Colonic mucosa (tissue), 4 donors: ENCODE measurements at regions of chr12 and their contacts with region 1.

Region 1: GRCh38 chr12:121560392-121561008 is 20.3 kb downstream of the KDM2B start:
- DNase-seq: no peak
- H3K4me3 ChIP-seq: no peak overlapping the region
- H3K27ac ChIP-seq: no peak overlapping the region
- H3K4me1 ChIP-seq: peaks cover 3% of the 10 kb centered on the region
- H3K27me3 ChIP-seq: no peaks in the 10 kb centered on the region
- CTCF ChIP-seq: no peak

Region 2: GRCh38 chr12:121337416-121337815 is 223.1 kb before region 1 on chr12:
- intact Hi-C with region 1: no loop called
- DNase-seq: no peak
- H3K4me3 ChIP-seq: no peak overlapping the region
- H3K27ac ChIP-seq: no peak overlapping the region
- H3K4me1 ChIP-seq: no peaks in the 10 kb centered on the region
- H3K27me3 ChIP-seq: no peaks in the 10 kb centered on the region
- CTCF ChIP-seq: no peak

Region 3: GRCh38 chr12:121614872-121615467 is 54.5 kb after region 1 on chr12:
- intact Hi-C with region 1: loop called (anchors 5 kb)
- DNase-seq: no peak
- H3K4me3 ChIP-seq: no peak overlapping the region
- H3K27ac ChIP-seq: no peak overlapping the region
- H3K4me1 ChIP-seq: no peaks in the 10 kb centered on the region
- H3K27me3 ChIP-seq: no peaks in the 10 kb centered on the region
- CTCF ChIP-seq: no peak